ENCODE measurements at regions of chr1 and their contacts with region 1.

Region 1: GRCh38 chr1:101309334-101310311 is 72.8 kb downstream of the S1PR1 start:
- DNase-seq: peak; percentile 81
- H3K4me3 Mint-ChIP-seq: peak overlapping the region; percentile 76
- H3K27ac Mint-ChIP-seq: peak overlapping the region; percentile 99
- H3K4me1 Mint-ChIP-seq: peaks cover 74% of the 10 kb centered on the region
- H3K27me3 Mint-ChIP-seq: no peaks in the 10 kb centered on the region

Region 2: GRCh38 chr1:100989306-100990077 is 320.1 kb before region 1 on chr1:
- CTCF ChIA-PET with region 1: no interaction called
- DNase-seq: no peak
- H3K4me3 Mint-ChIP-seq: no peak overlapping the region
- H3K27ac Mint-ChIP-seq: no peak overlapping the region
- H3K4me1 Mint-ChIP-seq: peaks cover 4% of the 10 kb centered on the region
- H3K27me3 Mint-ChIP-seq: no peaks in the 10 kb centered on the region

Region 3: DNA sequence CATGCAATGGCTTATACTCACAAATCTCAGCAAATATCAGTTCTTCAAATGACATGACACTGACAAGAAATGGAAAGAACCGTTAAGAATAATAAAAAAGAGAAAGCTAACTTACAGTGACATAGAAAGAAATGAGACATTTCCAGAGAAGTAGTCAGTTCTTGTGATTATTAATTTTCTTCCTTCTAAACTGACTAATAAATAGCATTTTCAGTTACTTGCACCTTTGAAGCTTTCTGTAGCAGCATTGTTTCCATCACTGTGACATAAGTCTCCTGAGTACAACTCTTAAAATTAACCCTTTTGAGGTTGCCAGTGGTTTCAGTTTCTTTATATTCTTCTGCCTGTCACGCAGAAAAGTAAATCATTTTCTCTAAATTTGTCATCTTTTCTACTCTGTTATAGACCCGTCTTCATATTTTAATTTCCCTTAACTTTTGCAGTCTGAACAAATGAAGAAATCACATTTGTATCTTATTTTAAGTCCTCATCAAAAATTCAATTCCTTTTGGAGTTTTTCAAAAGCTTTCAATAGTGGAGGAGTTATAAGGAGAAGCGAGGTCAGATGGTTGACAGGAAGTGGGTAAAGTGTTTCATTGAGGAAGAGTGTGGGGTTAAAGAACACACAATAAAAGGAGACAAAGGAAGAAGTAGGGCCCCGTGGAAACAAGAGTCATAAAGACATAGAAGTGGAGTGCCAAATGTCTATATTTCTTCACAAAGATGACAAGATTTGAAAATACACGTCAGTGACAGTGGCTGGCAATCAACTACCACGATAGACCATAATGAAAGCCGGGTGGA is 130.7 kb before region 1 on chr1:
- CTCF ChIA-PET with region 1: no interaction called
- DNase-seq: peak; percentile 30
- H3K4me3 Mint-ChIP-seq: peak overlapping the region; percentile 84
- H3K27ac Mint-ChIP-seq: peak overlapping the region; percentile 99
- H3K4me1 Mint-ChIP-seq: peaks cover 76% of the 10 kb centered on the region
- H3K27me3 Mint-ChIP-seq: no peaks in the 10 kb centered on the region

Region 4: GRCh38 chr1:101238681-101239094 is 70.9 kb before region 1 on chr1:
- CTCF ChIA-PET with region 1: interaction called, 18 read pairs
- DNase-seq: peak; percentile 92
- H3K4me3 Mint-ChIP-seq: peak overlapping the region; percentile 97
- H3K27ac Mint-ChIP-seq: peak overlapping the region; percentile 99
- H3K4me1 Mint-ChIP-seq: peaks cover 52% of the 10 kb centered on the region
- H3K27me3 Mint-ChIP-seq: peaks cover 14% of the 10 kb centered on the region

Region 5: GRCh38 chr1:101323535-101323934 is 13.9 kb after region 1 on chr1:
- CTCF ChIA-PET with region 1: interaction called, 12 read pairs
- DNase-seq: no peak
- H3K4me3 Mint-ChIP-seq: no peak overlapping the region
- H3K27ac Mint-ChIP-seq: no peak overlapping the region
- H3K4me1 Mint-ChIP-seq: no peaks in the 10 kb centered on the region
- H3K27me3 Mint-ChIP-seq: peaks cover 14% of the 10 kb centered on the region

Region 6: GRCh38 chr1:101357444-101357986 is 47.9 kb after region 1 on chr1:
- CTCF ChIA-PET with region 1: interaction called, 135 read pairs
- DNase-seq: peak; percentile 78
- H3K4me3 Mint-ChIP-seq: no peak overlapping the region
- H3K27ac Mint-ChIP-seq: peak overlapping the region; percentile 37
- H3K4me1 Mint-ChIP-seq: peaks cover 16% of the 10 kb centered on the region
- H3K27me3 Mint-ChIP-seq: peaks cover 7% of the 10 kb centered on the region

Region 7: DNA sequence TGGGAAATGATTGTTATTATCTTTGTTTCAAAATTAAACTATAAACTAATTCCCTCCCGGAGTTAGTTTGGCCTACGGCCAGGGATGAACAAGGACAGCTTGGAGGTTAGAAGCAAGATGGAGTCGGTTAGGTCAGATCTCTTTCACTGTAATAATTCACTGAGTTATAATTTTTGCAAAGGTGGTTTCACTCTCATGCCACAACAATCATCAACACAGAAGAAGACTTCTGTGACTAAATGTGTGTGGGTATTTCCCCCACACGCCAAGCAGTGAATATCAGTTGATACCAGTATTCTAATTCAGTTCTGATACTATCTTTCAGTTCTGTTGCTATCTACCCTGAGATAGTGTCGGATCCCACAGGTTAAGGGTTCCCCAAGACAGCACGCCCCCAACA is 142.3 kb after region 1 on chr1:
- CTCF ChIA-PET with region 1: interaction called, 19 read pairs
- DNase-seq: no peak
- H3K4me3 Mint-ChIP-seq: no peak overlapping the region
- H3K27ac Mint-ChIP-seq: no peak overlapping the region
- H3K4me1 Mint-ChIP-seq: peaks cover 34% of the 10 kb centered on the region
- H3K27me3 Mint-ChIP-seq: peaks cover 3% of the 10 kb centered on the region